H1 (cell line): ENCODE measurements at regions of chr10 and their contacts with region 1.

Region 1: GRCh38 chr10:17257466-17258321 is 29.7 kb downstream of the VIM start:
- DNase-seq: peak in 1 of 2 experiments; percentile 66
- H3K4me3 ChIP-seq: no peak overlapping the region; a peak in 1 of 8 replicates
- H3K27ac ChIP-seq: no peak overlapping the region
- H3K4me1 ChIP-seq: peaks cover 0 to 4% (median 0%) of the 10 kb centered on the region in 4 experiments; a peak in 1 of 7 replicates
- H3K27me3 ChIP-seq: no peaks in the 10 kb centered on the region
- CTCF ChIP-seq: peak in 2 of 3 experiments; percentile 78; a peak in 3 of 4 replicates
- EP300 ChIP-seq: no peak
- POLR2A ChIP-seq: no peak
- RAD21 ChIP-seq: peak; percentile 95 to 96

Region 2: GRCh38 chr10:16845248-16845647 is 412.4 kb before region 1 on chr10:
- CTCF ChIA-PET with region 1: interaction called, 11 read pairs
- POLR2A ChIA-PET with region 1: no interaction called
- DNase-seq: no peak
- H3K4me3 ChIP-seq: no peak overlapping the region
- H3K27ac ChIP-seq: no peak overlapping the region
- H3K4me1 ChIP-seq: no peaks in the 10 kb centered on the region; a peak in 1 of 7 replicates
- H3K27me3 ChIP-seq: no peaks in the 10 kb centered on the region
- CTCF ChIP-seq: no peak
- EP300 ChIP-seq: no peak
- POLR2A ChIP-seq: no peak
- RAD21 ChIP-seq: no peak

Region 3: DNA sequence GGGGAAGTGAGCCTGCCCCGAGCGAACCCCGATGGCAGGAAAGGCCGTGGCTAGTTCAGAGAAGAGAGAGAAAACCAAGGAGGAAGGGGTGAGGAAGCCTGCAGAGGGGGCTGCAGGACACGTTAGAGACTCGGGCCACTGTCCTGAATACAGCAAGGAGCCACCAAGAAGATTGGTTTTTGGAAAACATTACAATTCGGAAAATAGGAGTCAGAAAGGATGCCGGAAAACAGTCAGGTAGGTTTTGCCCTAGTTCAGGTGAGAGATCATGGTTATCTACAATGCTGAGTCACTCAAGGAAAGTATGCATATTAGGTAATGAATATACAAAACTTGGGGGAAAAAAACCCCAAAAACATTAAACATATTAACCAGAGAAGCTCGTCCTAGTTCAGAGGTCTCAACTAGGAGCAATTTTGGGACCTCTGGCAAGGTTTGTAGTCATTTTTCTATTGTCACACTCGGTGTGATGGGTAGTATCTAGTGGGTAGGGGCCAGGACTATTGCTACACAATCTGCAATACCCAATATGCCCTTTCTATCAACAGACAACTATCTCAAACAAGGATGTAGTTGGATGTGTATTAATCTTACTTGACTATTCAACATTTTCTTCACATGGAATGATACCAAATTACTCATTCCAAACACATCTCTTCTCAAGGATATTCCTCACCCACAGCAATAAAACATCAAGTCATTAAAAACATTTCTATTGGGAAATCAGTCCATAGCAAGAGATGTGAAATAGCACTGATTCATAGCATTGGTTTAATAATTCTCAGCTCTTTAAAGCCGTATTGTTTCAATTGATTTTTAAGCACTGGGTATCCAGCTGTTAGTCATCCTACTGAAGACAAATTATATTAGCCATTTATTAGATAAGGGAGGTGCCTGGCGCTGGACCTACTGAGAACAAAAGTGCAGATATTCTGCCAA is 366.1 kb before region 1 on chr10:
- CTCF ChIA-PET with region 1: interaction called, 11 read pairs
- POLR2A ChIA-PET with region 1: no interaction called
- DNase-seq: peak; percentile 43 to 63
- H3K4me3 ChIP-seq: peak overlapping the region in 1 of 4 experiments; percentile 40; a peak in 1 of 8 replicates
- H3K27ac ChIP-seq: peak overlapping the region; percentile 60; the same call in 1 of the 2 replicates
- H3K4me1 ChIP-seq: 0 out of 7 replicates have a peak, but pooled peaks cover 0 to 2% (median 0%) of the 10 kb centered on the region in 4 experiments
- H3K27me3 ChIP-seq: no peaks in the 10 kb centered on the region
- CTCF ChIP-seq: peak; percentile 63 to 76 (median 73)
- EP300 ChIP-seq: no peak
- POLR2A ChIP-seq: peak; percentile 95 to 99
- RAD21 ChIP-seq: peak; percentile 92 to 94

Region 4: DNA sequence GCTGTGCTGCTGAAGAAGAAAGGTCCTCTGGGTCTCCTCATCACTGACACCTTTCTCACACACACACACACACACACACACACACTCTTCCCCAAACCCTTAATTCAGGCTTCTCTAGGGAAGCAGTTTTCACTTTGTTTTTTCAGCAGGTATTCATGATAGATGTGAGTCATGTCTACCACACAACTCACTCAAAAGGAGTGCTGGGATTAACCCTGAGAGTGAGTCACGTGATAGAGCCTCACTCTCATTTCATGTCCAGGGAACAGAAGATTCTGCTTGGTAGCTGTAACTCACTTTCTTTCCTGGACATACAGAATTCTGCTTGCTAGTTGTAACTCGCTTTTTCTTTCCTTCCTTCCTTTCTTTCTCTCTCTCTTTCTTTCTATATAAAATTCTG is 15.7 kb after region 1 on chr10:
- CTCF ChIA-PET with region 1: interaction called, 13 read pairs
- POLR2A ChIA-PET with region 1: no interaction called
- DNase-seq: no peak
- H3K4me3 ChIP-seq: no peak overlapping the region
- H3K27ac ChIP-seq: no peak overlapping the region
- H3K4me1 ChIP-seq: peaks cover 0 to 3% (median 0%) of the 10 kb centered on the region in 4 experiments; a peak in 1 of 7 replicates
- H3K27me3 ChIP-seq: no peaks in the 10 kb centered on the region
- CTCF ChIP-seq: no peak
- EP300 ChIP-seq: no peak
- POLR2A ChIP-seq: no peak
- RAD21 ChIP-seq: no peak

Region 5: GRCh38 chr10:17316488-17317170 is 58.9 kb after region 1 on chr10:
- CTCF ChIA-PET with region 1: no interaction called
- POLR2A ChIA-PET with region 1: no interaction called
- DNase-seq: no peak
- H3K4me3 ChIP-seq: no peak overlapping the region
- H3K27ac ChIP-seq: no peak overlapping the region
- H3K4me1 ChIP-seq: no peaks in the 10 kb centered on the region
- H3K27me3 ChIP-seq: no peaks in the 10 kb centered on the region
- CTCF ChIP-seq: no peak
- EP300 ChIP-seq: no peak
- POLR2A ChIP-seq: no peak
- RAD21 ChIP-seq: no peak

Region 6: GRCh38 chr10:17348501-17349349 is 91.0 kb after region 1 on chr10:
- CTCF ChIA-PET with region 1: no interaction called
- POLR2A ChIA-PET with region 1: no interaction called
- DNase-seq: no peak
- H3K4me3 ChIP-seq: no peak overlapping the region
- H3K27ac ChIP-seq: no peak overlapping the region
- H3K4me1 ChIP-seq: no peaks in the 10 kb centered on the region
- H3K27me3 ChIP-seq: no peaks in the 10 kb centered on the region
- CTCF ChIP-seq: no peak
- EP300 ChIP-seq: no peak
- POLR2A ChIP-seq: no peak
- RAD21 ChIP-seq: no peak